GM18951 (cell line): ENCODE measurements at regions of chr14 and their contacts with region 1.

Region 1: DNA sequence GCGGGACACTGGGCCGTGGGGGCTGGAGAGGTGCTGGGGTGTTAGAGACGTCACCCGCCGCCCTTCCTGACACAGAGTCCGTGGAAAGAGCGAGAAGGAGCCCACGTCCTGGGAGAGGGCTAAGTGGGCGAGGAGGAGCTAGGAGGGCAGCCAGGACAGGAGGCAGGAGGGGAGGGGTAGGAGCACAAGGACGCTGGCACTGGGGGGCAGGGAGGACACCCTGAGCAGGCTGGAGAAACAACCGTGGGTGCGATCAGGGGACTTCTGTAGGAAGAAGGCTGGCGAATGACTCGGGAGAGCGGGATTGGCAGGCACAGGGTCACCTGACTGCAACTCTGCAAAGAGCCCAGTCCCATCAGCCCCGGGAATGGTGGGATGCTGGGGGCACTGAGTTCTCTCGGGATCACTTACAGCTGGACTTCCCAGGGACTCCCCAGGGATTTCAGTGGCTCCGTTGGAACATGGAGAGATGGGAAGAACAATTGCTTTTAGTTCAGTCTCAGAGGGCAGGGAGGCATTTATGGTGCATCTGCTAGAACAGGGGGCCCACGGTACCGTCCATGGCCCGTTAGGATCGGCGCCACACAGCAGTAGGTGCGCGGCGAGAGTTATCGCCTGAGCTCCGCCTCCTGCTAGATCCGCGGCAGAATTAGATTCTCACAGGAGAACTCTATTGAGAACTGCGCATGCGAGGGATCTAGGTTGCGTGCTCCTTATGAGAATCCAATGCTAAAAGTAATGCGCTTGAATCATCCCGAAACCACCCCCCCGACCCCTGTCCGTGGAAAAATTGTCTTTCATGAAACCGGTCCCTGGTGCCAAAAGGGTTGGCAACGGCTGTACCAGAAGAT is 24.3 kb downstream of the UBR7 start:
- POLR2A ChIP-seq: no peak

Region 2: DNA sequence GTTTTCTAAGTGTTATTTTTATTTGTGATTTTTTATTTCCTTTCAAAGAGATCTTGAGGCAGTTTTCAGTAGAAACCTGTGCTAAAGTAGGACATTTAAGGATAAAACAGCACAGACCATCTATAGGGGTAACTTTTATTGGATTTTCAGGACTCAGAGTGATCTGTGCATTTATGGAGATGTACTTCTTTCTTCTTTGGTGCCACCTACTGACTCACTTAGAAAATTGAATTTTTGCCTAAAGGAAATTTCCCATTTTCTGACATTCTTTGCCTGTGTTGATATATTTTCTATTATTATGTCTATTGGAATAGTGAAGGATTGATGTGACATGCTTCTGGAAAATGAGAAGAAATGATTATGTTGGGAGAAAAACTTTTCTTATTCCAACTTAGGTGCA is 312.4 kb after region 1 on chr14:
- in situ Hi-C with region 1: loop called (anchors 25 kb)
- POLR2A ChIP-seq: no peak

Region 3: GRCh38 chr14:93629643-93630042 is 398.3 kb after region 1 on chr14:
- in situ Hi-C with region 1: loop called (anchors 10 kb)
- POLR2A ChIP-seq: no peak